ENCODE measurements at regions of chr7 and their contacts with region 1.

Region 1: DNA sequence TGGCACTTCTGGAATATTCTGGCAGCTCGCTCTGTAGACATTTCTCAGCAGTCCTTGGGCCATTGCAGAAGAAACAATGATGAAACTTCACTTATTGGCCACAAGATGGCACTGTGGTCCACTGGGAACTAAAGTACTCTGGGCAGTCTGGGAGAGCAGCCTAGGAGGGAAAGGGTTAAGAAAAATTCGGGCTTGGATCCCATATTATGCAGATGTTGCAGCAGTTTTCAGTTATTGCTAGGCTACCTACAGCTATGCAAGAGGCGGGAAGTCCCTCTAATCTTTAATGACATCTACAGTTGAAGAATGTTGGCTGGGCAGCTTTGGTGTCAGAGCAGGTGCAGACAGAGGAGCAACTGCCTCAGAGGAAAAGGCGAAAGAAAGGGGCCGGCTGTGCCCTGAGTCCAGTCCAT is 201.7 kb upstream of the PRSS58 start:
- DNase-seq: peak; percentile 52
- CTCF ChIP-seq: peak; percentile 67

Region 2: DNA sequence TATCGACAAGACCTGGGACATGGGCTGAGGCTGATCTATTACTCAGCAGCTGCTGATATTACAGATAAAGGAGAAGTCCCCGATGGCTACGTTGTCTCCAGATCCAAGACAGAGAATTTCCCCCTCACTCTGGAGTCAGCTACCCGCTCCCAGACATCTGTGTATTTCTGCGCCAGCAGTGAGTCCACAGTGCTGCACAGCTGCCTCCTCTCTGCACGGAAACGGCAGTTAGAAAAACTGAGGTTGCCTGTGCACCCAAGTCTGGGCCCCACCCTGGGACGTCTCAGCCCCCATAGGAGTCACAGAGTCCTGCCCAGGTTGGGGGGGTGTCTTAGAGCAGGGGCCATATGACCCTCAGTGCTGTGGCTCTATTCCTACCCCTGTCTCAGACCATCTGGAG is 34.3 kb before region 1 on chr7:
- CTCF ChIA-PET with region 1: interaction called, 11 read pairs
- POLR2A ChIA-PET with region 1: no interaction called
- DNase-seq: no peak
- CTCF ChIP-seq: no peak

Region 3: GRCh38 chr7:142445019-142445686 is 14.4 kb before region 1 on chr7:
- CTCF ChIA-PET with region 1: interaction called, 13 read pairs
- POLR2A ChIA-PET with region 1: no interaction called
- DNase-seq: no peak
- CTCF ChIP-seq: no peak

Region 4: DNA sequence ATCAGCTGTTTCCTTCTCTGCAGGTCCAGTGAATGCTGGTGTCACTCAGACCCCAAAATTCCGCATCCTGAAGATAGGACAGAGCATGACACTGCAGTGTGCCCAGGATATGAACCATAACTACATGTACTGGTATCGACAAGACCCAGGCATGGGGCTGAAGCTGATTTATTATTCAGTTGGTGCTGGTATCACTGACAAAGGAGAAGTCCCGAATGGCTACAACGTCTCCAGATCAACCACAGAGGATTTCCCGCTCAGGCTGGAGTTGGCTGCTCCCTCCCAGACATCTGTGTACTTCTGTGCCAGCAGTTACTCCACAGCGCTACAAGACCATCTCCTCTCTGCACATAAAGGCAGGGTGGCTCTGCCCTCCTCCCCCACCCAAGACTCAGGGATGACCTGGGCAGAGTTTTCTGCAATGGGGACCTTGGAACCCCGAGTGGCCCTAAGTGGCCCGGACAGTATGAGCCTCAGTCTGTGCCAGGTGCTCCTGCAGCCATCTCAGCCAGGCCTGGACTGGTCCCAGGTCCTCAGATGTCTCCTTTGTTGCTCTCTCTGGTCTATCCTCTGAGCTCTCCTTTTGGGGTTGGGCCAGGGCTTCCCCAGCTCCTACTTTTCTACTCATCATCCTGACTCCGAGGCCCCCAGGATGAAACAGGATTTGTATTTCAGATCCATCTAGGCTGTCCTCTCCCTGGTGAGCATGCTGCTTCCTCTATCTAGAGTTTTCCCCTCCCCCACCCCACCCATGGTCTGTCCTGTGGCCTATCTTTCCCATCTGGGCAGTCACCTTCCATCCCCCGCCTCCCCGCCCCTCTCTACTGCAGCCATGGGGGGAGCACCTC is 10.4 kb after region 1 on chr7:
- CTCF ChIA-PET with region 1: interaction called, 21 read pairs
- POLR2A ChIA-PET with region 1: no interaction called
- DNase-seq: no peak
- CTCF ChIP-seq: no peak

Region 5: DNA sequence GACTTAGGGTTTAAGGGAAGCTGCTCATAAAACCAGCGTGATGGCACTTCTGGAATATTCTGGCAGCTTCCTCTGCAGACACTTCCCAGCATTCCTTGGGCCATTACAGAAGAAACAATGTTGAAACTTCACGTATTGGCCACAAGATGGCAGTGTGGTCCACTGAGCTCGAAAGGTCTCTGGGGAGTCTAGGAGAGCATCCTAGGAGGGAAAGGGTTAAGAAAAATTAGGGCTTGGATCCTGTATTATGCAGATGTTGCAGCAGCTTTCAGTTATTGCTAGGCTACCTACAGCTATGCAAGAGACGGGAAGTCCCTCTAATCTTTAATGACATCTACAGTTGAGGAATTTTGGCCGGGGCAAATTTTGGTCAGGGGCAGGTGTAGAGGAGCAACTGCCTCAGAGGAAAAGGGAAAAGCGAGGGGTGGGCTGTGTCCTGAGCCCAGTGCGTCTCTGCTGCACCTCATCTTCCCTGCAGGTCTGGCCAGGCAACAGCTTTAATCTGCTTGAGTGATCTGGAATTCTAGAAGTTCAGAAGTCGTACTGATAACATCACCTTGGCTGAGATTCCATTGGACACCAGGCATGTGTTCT is 19.0 kb after region 1 on chr7:
- CTCF ChIA-PET with region 1: interaction called, 79 read pairs
- POLR2A ChIA-PET with region 1: no interaction called
- DNase-seq: peak; percentile 31
- CTCF ChIP-seq: peak; percentile 68

Region 6: GRCh38 chr7:142516038-142516501 is 56.5 kb after region 1 on chr7:
- CTCF ChIA-PET with region 1: interaction called, 10 read pairs
- POLR2A ChIA-PET with region 1: no interaction called
- DNase-seq: peak; percentile 57
- CTCF ChIP-seq: peak; percentile 79

Region 7: GRCh38 chr7:142646386-142647140 is 187.0 kb after region 1 on chr7:
- CTCF ChIA-PET with region 1: no interaction called
- POLR2A ChIA-PET with region 1: no interaction called
- DNase-seq: no peak
- CTCF ChIP-seq: no peak